HCT116 (cell line): ENCODE measurements at regions of chr12 and their contacts with region 1.

Region 1: DNA sequence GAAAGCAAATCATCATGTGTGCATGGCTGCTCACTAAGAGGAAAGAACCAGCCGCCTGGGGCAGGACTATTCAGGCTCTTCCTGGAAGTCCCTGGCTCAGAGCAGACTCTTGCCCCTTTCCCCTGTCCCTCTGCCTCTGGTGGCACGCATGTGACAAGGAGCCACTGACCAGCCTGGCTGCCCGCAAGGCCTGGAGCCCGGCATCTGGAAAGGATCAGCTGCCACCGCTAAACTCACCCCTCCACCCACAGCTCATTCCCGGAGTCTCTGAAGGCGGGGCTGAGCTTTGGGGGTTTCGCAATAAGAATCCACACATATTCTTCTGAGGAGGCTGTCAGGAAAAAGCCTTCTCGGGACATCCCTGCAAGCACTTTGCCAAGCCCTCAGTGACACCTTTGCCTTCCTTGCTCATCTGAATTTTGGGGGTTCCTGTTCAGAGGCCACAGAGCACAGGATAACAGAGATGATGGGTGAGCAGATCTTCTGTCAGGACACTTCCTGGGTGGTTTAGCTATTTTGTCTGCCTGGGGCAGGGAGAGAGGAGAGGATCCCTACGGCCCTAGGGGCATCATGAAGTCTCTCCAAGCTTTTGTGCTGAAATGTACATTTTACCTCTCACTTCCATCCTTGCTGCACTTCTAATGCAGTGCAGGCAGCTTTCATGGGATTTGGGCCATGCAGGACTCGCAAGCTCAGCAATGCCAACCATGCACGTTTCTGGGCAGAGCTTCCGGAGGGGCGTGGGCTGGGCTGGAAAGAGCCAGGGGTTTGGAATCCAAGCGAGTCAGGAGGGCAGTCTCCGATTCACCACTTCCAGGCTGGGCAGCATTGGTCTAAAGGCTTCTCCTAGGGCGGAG is 124.8 kb upstream of the MAP1LC3B2 start:
- DNase-seq: peak; percentile 91
- ATAC-seq: peak; percentile 92
- H3K4me3 ChIP-seq: peak overlapping the region; percentile 31 to 45
- H3K27ac ChIP-seq: peak overlapping the region; percentile 93
- H3K4me1 ChIP-seq: peaks cover 19 to 48% of the 10 kb centered on the region in 2 experiments
- H3K27me3 ChIP-seq: no peaks in the 10 kb centered on the region
- CTCF ChIP-seq: no peak
- POLR2A ChIP-seq: no peak
- RAD21 ChIP-seq: no peak

Region 2: GRCh38 chr12:116455540-116456329 is 21.4 kb after region 1 on chr12:
- CTCF ChIA-PET with region 1: no interaction called
- POLR2A ChIA-PET with region 1: interaction called, 12 read pairs
- RAD21 ChIA-PET with region 1: no interaction called
- intact Hi-C with region 1: no loop called
- DNase-seq: peak; percentile 85
- ATAC-seq: peak; percentile 41
- H3K4me3 ChIP-seq: peak overlapping the region; percentile 27 to 28
- H3K27ac ChIP-seq: peak overlapping the region; percentile 90
- H3K4me1 ChIP-seq: peaks cover 41 to 67% of the 10 kb centered on the region in 2 experiments
- H3K27me3 ChIP-seq: no peaks in the 10 kb centered on the region
- CTCF ChIP-seq: no peak
- POLR2A ChIP-seq: no peak
- RAD21 ChIP-seq: no peak

Region 3: GRCh38 chr12:116492703-116493324 is 58.4 kb after region 1 on chr12:
- CTCF ChIA-PET with region 1: no interaction called
- POLR2A ChIA-PET with region 1: interaction called, 9 read pairs
- RAD21 ChIA-PET with region 1: interaction called in 1 of 2 experiments, 6 read pairs
- intact Hi-C with region 1: loop called (anchors 2 kb)
- DNase-seq: peak; percentile 79
- ATAC-seq: peak; percentile 7; the same call in 1 of the 2 replicates
- H3K4me3 ChIP-seq: peak overlapping the region in 1 of 2 experiments; percentile 9; a peak in 1 of 4 replicates
- H3K27ac ChIP-seq: peak overlapping the region; percentile 99
- H3K4me1 ChIP-seq: peaks cover 53 to 70% of the 10 kb centered on the region in 2 experiments
- H3K27me3 ChIP-seq: no peaks in the 10 kb centered on the region
- CTCF ChIP-seq: no peak
- POLR2A ChIP-seq: no peak
- RAD21 ChIP-seq: 0 out of 2 replicates have a peak, but pooled peaks have one; percentile 7

Region 4: GRCh38 chr12:116533343-116534251 is 99.2 kb after region 1 on chr12:
- CTCF ChIA-PET with region 1: no interaction called
- POLR2A ChIA-PET with region 1: interaction called, 4 read pairs
- RAD21 ChIA-PET with region 1: no interaction called
- intact Hi-C with region 1: loop called (anchors 2 kb)
- DNase-seq: peak; percentile 62
- ATAC-seq: peak; percentile 86
- H3K4me3 ChIP-seq: peak overlapping the region; percentile 74 to 83
- H3K27ac ChIP-seq: peak overlapping the region; percentile 83
- H3K4me1 ChIP-seq: peaks cover 67 to 89% of the 10 kb centered on the region in 2 experiments
- H3K27me3 ChIP-seq: no peaks in the 10 kb centered on the region
- CTCF ChIP-seq: no peak
- POLR2A ChIP-seq: peak; percentile 38
- RAD21 ChIP-seq: no peak